MCF 10A (cell line): ENCODE measurements at regions of chr2 and their contacts with region 1.

Region 1: DNA sequence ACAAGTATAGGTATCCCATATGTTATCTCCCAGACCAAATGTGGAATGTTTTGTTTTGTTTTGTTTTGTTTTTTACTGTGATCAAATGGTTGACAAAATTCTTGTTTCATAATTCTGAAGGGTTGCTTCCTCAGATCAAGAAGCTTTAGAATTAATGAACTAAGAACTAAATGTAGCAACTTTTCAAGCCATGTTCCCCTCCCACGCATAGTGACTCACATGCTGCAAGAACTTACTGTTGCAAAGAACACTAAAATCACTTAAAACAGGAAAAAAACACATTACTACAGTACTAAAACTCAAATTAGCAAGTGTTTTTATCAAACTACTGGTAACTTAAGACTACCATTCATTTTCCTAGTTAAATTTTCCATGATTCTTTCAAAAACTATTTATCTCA is 30.6 kb downstream of the HNRNPLL start:
- DNase-seq: peak; percentile 73
- H3K4me3 Mint-ChIP-seq: no peak overlapping the region
- H3K27ac Mint-ChIP-seq: no peak overlapping the region
- H3K4me1 Mint-ChIP-seq: peaks cover 10% of the 10 kb centered on the region
- H3K27me3 Mint-ChIP-seq: no peaks in the 10 kb centered on the region
- CTCF ChIP-seq: no peak

Region 2: GRCh38 chr2:38560092-38560491 is 12.1 kb before region 1 on chr2:
- CTCF ChIA-PET with region 1: interaction called, 12 read pairs
- POLR2A ChIA-PET with region 1: interaction called, 3 read pairs
- intact Hi-C with region 1: no loop called
- DNase-seq: no peak
- H3K4me3 Mint-ChIP-seq: no peak overlapping the region
- H3K27ac Mint-ChIP-seq: no peak overlapping the region
- H3K4me1 Mint-ChIP-seq: no peaks in the 10 kb centered on the region
- H3K27me3 Mint-ChIP-seq: no peaks in the 10 kb centered on the region
- CTCF ChIP-seq: no peak

Region 3: DNA sequence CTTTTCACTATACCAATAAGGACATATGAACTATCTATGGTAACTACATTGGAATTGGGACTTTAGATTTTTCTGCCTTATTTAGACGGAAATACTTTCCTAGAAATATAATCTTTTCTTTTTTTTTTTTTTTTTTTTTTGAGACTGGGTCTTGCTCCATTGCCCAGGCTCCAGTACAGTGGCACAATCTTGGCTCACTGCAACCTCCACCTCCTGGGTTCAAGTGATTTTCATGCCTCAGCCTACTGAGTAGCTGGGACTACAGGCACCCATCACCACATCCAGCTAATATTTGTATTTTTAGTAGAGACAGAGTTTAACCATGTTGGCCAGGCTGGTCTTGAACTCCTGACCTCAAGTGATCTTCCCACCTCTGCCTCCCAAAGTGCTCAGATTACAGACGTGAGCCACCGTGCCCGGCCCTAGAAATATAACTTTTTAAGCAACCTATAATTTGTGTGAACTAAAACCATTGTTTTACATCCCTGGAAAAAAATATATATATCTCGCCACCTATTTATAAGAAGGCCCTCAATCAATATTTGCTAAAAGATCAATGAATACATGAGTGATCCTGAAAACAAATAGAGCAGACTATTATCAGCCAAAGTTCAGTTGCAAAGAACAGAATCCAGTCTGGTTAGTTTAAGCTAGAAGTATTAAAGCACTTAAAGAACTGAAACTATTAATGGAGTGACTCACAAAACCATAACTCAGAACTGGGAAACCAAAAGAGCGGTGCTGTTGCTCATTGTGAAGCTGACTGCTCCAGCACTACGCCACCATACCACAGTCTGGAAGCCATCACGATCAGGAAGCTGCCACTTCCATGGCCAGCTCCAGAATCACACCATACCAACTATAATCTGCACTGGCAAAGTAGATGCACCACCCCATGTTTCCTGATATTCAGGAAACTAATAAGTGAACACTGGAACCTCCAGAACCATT is 39.0 kb after region 1 on chr2:
- CTCF ChIA-PET with region 1: no interaction called
- POLR2A ChIA-PET with region 1: no interaction called
- intact Hi-C with region 1: no loop called
- DNase-seq: no peak
- H3K4me3 Mint-ChIP-seq: no peak overlapping the region
- H3K27ac Mint-ChIP-seq: no peak overlapping the region
- H3K4me1 Mint-ChIP-seq: peaks cover 4% of the 10 kb centered on the region
- H3K27me3 Mint-ChIP-seq: no peaks in the 10 kb centered on the region
- CTCF ChIP-seq: no peak